Esophagus squamous epithelium (tissue), 5 donors: ENCODE measurements at regions of chr3 and their contacts with region 1.

Region 1: DNA sequence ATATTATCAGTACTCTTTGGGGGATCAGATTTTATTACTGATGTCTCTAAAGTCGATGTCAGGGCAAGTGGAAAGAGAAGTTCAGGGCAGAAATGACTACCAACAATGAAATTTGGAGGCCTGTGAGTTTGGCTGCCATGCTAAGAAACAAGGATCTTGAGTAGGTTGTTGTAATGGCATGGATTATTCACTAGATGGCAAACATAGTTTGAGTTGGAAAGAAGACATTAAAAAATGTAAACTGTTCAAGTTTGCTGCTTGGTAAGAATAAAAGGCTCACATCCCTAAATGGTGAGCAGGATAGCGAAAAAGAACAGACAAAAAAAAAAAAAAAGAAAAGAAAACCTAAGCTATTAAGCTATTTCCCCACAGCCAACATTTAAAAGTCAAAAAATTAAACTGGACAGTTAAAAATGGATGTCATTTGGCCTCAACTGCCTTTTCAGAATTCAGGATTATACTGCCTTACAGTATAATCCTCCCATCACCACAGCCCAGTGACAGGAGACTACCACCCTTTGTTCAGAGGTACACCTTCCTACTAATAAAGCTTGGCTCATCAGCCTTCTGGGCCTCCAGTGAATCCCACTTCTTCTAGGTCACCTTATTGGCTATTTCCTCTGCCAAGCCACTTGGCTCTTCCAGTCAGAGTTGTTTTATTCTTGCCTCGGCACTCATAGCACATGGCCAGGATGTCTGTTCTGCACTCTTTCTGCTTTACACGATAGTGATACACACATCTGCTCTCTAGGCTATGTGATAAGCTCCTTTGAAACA is 163.7 kb downstream of the PLD1 start:
- DNase-seq: no peak
- H3K4me3 ChIP-seq: no peak overlapping the region
- H3K27ac ChIP-seq: peak overlapping the region in 3 of 4 donors; percentile 26 to 63 (median 56)
- H3K4me1 ChIP-seq: peaks cover 0 to 9% (median 3%) of the 10 kb centered on the region in 3 donors
- H3K27me3 ChIP-seq: no peaks in the 10 kb centered on the region
- CTCF ChIP-seq: peak in 5 of 6 experiments; percentile 43 to 64 (median 57)
- POLR2A ChIP-seq: no peak

Region 2: DNA sequence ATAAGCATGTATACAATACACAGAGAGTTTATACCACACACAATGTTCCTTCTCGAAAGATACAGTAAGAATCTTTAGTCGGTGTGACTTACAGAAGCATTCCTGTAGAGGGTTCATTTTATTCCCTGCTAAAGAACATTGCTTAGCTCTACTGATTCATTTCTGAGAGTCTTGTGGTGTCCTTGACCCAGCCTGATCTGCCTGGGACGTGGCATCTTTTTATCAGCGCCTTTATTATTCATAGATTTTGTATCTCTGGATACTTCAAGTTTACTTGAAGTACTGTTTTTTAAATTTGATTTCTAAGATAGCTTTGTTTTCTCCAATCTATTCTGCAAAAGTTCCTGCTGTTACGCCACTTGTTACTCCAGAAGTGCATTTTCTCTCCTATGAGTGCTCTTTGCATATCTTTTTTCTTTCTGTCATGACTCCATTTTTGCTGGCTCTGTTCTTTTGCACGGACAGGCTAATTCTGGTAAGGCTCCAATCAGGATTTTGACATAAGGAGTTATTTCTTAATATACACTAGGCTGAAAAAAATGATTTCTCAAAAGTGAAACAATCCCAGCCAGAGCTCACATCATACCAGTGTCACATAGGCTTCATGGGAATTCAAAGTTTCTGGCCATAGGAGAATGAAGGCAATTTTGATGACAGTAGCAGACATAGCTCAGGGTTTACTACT is 71.8 kb before region 1 on chr3:
- intact Hi-C with region 1: no loop called
- DNase-seq: no peak
- H3K4me3 ChIP-seq: no peak overlapping the region
- H3K27ac ChIP-seq: no peak overlapping the region
- H3K4me1 ChIP-seq: no peaks in the 10 kb centered on the region
- H3K27me3 ChIP-seq: no peaks in the 10 kb centered on the region
- CTCF ChIP-seq: no peak
- POLR2A ChIP-seq: no peak

Region 3: DNA sequence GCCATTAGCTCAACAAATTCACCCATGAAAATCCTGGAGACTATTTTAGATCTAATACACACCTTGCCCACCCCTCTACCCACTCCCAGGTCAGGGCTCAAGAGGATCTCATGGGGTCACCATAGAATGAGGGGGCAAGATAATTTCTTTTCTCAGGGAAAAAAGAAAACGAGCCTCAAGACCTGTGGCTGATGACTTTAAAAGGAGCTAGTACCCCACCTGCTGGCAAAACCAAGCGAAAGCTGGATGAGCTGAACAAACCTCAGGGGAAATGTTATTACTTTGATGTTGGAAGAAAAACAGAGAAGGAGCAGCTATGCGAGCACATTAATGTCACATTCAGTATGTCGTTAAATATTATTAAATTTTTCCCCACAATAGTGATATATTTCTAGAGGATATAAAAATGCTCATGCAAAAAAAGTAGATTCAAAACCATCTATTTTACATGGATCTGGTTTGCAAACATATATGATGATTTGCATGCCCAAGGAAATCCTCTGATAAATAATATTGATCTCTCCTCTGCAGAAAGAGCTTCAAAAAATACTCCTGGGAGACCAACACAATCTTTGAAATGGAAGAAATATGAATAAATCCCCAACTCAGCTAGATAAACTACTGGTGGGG is 126.0 kb after region 1 on chr3:
- intact Hi-C with region 1: loop called (anchors 5 kb)
- DNase-seq: no peak
- H3K4me3 ChIP-seq: no peak overlapping the region
- H3K27ac ChIP-seq: peak overlapping the region in 2 of 4 donors; percentile 85 to 86
- H3K4me1 ChIP-seq: peaks cover 19 to 72% (median 28%) of the 10 kb centered on the region in 3 donors
- H3K27me3 ChIP-seq: no peaks in the 10 kb centered on the region
- CTCF ChIP-seq: peak in 5 of 6 experiments; percentile 63 to 74 (median 67)
- POLR2A ChIP-seq: no peak